Prostate gland (tissue), 2 donors: ENCODE measurements at regions of chr12 and their contacts with region 1.

Region 1: DNA sequence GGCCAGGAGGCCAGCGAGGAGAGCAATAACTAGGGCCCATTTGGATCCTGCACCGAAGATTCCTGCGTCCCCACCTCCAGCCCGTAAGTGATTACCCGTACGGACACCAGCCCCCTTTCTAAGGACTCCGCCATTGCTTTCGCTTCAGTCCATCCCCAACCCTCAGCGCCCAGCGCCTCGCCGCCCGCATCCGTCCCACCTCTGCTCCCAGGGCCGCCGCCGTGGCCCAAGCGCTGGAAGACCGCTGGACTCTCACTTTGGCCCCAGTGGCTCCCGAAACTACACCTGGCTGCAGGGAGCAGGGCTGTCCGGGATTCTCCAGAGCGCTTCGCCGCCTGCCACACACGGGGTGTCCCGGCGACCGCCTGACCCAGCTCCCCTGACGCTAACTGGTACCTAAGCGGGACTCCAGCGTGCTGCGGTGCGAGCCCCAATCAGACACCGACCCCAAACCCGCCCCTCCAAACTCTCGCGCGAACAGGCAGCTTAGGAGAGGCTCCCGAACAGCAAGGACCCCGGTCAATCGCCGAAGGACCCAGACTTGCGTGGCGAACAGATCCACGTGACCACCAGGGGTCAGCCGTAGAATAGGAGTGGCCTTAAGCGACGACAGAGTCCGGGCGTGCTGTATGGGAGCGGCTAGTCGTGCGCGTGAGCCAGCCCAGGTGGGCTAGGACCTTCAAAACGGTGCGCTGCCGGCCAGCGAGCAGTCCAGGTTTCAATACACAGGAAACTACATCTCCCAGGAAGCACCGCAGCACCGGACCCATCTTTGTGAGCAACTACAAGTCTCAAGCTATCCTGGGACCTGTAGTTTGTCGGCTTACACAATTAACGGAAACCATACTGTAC is at the start of gene CNPY2:
- DNase-seq: peak; percentile 92
- H3K4me3 ChIP-seq: peak within 1 kb of the TSS; percentile 69 to 95
- H3K27ac ChIP-seq: peak within 1 kb of the TSS; percentile 87 to 91
- H3K4me1 ChIP-seq: no peaks in the 10 kb centered on the region
- H3K27me3 ChIP-seq: no peaks in the 10 kb centered on the region
- CTCF ChIP-seq: peak in 3 of 4 experiments; percentile 7 to 32 (median 23)
- POLR2A ChIP-seq: peak; percentile 53
- total RNA-seq, gene CNPY2: 97.7 to 101 TPM

Region 2: GRCh38 chr12:56224102-56224701 is 91.6 kb before region 1 on chr12 and contains the start of gene NABP2:
- intact Hi-C with region 1: no loop called
- DNase-seq: peak; percentile 98
- H3K4me3 ChIP-seq: peak within 1 kb of the TSS; percentile 46 to 47
- H3K27ac ChIP-seq: peak within 1 kb of the TSS; percentile 75 to 99
- H3K4me1 ChIP-seq: no peaks in the 10 kb centered on the region
- H3K27me3 ChIP-seq: no peaks in the 10 kb centered on the region
- CTCF ChIP-seq: peak; percentile 82 to 99 (median 96)
- POLR2A ChIP-seq: peak; percentile 42
- total RNA-seq, gene NABP2: 21.4 to 33.2 TPM

Region 3: DNA sequence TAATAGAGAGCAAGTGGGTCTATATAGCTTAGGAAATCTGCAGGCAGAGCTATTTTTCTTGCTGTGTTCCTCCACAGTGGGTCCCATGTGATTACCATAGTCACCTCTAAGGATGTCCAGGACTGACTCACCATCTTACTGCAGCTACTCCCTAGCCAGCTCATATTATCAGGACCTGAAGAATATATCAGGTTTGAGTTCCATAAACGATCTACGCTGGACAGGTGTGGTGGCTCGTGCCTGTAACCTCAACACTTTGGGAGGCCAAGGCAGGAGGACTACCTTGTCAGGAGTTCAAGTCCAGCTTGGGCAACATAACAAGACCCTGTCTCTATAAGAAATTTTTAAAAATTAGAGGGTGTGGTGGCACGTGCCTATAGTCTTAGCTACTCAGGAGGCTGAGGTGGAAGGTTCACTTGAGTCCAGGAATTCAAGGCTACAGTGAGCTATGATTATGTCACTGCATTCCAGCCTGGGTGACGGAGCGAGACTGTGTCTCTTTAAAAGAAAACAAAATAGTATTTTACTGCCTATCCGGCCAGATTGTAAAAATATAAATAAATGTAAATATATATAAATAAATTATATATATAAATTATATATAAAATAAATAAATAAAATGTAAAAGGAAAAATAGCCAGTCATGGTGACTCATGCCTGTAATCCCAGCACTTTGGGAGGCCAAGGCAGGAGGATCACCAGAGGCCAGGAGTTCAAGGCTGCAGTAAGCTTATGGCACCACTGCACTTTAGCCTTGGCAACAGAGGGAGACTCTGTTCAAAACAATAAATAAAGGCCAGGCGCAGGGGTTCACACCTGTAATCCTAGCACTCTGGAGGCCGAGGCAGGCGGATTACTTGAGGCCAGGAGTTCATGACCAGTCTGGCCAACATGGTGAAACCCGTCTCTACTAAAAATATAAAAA is 145.6 kb after region 1 on chr12:
- intact Hi-C with region 1: loop called (anchors 5 kb)
- DNase-seq: no peak
- H3K4me3 ChIP-seq: no peak overlapping the region
- H3K27ac ChIP-seq: no peak overlapping the region
- H3K4me1 ChIP-seq: no peaks in the 10 kb centered on the region
- H3K27me3 ChIP-seq: no peaks in the 10 kb centered on the region
- CTCF ChIP-seq: no peak
- POLR2A ChIP-seq: no peak

Region 4: GRCh38 chr12:56541631-56542030 is 225.8 kb after region 1 on chr12:
- intact Hi-C with region 1: no loop called
- DNase-seq: no peak
- H3K4me3 ChIP-seq: no peak overlapping the region
- H3K27ac ChIP-seq: no peak overlapping the region
- H3K4me1 ChIP-seq: no peaks in the 10 kb centered on the region
- H3K27me3 ChIP-seq: no peaks in the 10 kb centered on the region
- CTCF ChIP-seq: no peak
- POLR2A ChIP-seq: no peak